Transverse colon (tissue), 4 donors: ENCODE measurements at regions of chr3 and their contacts with region 1.

Region 1: GRCh38 chr3:83567785-83568324 is 1390.9 kb upstream of the CADM2 start:
- DNase-seq: no peak
- H3K4me3 ChIP-seq: no peak overlapping the region
- H3K27ac ChIP-seq: no peak overlapping the region
- H3K4me1 ChIP-seq: no peaks in the 10 kb centered on the region
- H3K27me3 ChIP-seq: no peaks in the 10 kb centered on the region
- CTCF ChIP-seq: no peak
- EP300 ChIP-seq: no peak
- POLR2A ChIP-seq: no peak

Region 2: DNA sequence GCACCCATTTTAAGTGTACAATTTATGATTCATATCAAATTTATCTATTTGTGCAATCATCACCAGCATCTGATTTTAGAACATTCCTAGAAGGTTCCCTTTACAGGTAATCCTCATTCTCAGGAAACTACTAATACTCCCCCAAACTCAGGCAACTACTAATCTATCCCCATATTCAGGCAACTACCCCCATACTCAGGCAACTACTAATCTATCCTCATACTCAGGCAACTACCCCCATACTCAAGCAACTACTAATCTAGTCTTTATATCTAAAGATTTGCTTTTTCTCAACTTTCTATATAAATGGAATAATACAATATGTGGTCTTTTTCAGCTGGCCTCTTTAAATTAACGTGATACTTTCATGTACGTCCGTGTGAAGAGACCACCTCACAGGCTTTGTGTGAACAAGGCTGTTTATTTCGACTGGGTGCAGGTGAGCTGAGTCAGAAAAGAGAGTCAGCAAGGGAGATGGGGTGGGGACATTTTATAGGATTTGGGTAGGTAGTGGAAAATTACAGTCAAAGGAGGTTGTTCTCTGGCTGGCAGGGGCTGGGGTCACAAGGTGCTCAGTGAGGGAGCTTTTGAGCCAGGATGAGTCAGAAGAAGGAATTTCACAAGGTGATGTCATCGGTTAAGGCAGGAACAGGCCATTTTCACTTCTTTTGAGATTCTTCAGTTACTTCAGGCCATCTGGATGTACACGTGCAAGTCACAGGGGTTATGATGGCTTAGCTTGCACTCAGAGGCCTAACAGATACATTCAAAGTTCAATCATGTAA is 53.5 kb before region 1 on chr3:
- in situ Hi-C with region 1: no loop called
- intact Hi-C with region 1: no loop called
- DNase-seq: no peak
- H3K4me3 ChIP-seq: no peak overlapping the region
- H3K27ac ChIP-seq: no peak overlapping the region
- H3K4me1 ChIP-seq: no peaks in the 10 kb centered on the region
- H3K27me3 ChIP-seq: no peaks in the 10 kb centered on the region
- CTCF ChIP-seq: no peak
- EP300 ChIP-seq: no peak
- POLR2A ChIP-seq: no peak

Region 3: GRCh38 chr3:84885199-84885882 is 1317.5 kb after region 1 on chr3:
- in situ Hi-C with region 1: no loop called
- intact Hi-C with region 1: loop called (anchors 5 kb)
- DNase-seq: no peak
- H3K4me3 ChIP-seq: no peak overlapping the region
- H3K27ac ChIP-seq: no peak overlapping the region
- H3K4me1 ChIP-seq: no peaks in the 10 kb centered on the region
- H3K27me3 ChIP-seq: no peaks in the 10 kb centered on the region
- CTCF ChIP-seq: no peak
- EP300 ChIP-seq: no peak
- POLR2A ChIP-seq: no peak

Region 4: GRCh38 chr3:85100316-85100715 is 1532.5 kb after region 1 on chr3:
- in situ Hi-C with region 1: no loop called
- intact Hi-C with region 1: no loop called
- DNase-seq: no peak
- H3K4me3 ChIP-seq: no peak overlapping the region
- H3K27ac ChIP-seq: no peak overlapping the region
- H3K4me1 ChIP-seq: no peaks in the 10 kb centered on the region
- H3K27me3 ChIP-seq: no peaks in the 10 kb centered on the region
- CTCF ChIP-seq: no peak
- EP300 ChIP-seq: no peak
- POLR2A ChIP-seq: no peak